ENCODE measurements at regions of chr12 and their contacts with region 1.

Region 1: DNA sequence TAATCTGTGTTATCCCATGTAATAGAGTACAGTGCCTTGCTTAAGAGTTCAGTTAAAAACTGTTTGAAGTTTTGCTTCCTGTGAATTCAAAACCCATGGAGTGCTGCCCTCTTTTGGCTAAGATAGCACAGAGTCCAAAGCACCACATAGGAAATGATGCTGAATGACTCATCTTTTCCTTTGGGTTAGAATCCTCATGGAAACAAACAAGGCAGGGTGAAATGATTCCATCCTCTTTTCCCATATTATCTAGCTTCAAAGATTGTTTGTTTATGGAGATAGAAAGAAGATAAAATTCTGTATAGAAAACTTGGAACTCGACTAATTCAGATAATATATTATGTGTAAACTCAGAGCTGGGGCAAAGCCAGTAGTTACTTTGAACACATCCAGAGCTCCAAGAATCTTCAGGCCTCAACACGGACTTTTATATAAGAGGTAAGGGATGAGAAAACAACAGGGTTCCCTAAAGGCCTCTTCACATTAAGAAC is 87.4 kb downstream of the OTOGL start:
- DNase-seq: peak; percentile 93
- ATAC-seq: peak; percentile 89
- H3K4me3 ChIP-seq: no peak overlapping the region
- H3K27ac ChIP-seq: peak overlapping the region; percentile 53
- H3K4me1 ChIP-seq: peaks cover 18% of the 10 kb centered on the region
- H3K27me3 ChIP-seq: no peaks in the 10 kb centered on the region
- CTCF ChIP-seq: peak; percentile 94

Region 2: DNA sequence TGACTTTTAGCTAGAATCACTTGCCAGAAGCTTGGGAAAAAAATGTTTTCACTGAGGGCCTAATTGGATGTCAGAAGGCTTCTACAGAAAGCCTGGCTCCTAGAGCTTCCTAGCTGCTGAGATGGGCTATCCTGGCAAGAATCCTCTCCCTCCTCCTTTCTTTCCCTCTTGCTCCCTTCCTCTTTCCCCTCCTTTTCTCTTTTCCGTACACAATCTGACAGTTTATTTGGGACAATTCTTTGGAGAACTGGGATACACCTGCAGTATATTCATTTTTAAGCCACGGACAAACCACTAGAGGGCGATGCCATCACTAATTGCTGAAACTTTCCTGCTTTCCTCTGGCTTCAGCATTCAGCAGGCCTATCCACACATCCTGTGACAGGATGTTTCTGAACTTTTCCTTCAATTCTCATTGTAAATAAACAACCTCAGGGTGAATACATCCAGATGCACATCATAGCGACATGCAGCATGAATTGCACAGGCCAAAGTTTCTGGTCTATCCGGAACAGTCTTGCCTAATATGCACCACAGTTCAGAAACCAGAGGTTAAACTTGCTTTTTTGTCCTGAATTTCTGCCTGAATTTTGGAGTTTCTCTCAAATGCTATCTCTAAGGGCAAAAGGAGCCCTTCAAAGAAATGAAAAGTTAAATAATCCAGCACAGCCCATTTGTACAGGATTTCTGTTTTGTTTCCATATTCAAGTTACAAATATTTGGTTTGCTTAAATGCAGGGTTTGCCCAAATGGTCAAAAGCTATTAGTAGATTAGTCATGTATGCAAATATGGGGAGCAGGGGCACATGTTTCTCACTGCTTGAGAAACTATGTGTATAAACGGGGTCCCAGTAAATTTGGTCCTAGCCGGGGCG is 638.8 kb before region 1 on chr12:
- CTCF ChIA-PET with region 1: no interaction called
- POLR2A ChIA-PET with region 1: no interaction called
- intact Hi-C with region 1: loop called (anchors 5 kb)
- DNase-seq: peak; percentile 91
- ATAC-seq: peak; percentile 22
- H3K4me3 ChIP-seq: peak overlapping the region; percentile 47
- H3K27ac ChIP-seq: peak overlapping the region; percentile 97
- H3K4me1 ChIP-seq: peaks cover 47% of the 10 kb centered on the region
- H3K27me3 ChIP-seq: no peaks in the 10 kb centered on the region
- CTCF ChIP-seq: peak; percentile 96

Region 3: DNA sequence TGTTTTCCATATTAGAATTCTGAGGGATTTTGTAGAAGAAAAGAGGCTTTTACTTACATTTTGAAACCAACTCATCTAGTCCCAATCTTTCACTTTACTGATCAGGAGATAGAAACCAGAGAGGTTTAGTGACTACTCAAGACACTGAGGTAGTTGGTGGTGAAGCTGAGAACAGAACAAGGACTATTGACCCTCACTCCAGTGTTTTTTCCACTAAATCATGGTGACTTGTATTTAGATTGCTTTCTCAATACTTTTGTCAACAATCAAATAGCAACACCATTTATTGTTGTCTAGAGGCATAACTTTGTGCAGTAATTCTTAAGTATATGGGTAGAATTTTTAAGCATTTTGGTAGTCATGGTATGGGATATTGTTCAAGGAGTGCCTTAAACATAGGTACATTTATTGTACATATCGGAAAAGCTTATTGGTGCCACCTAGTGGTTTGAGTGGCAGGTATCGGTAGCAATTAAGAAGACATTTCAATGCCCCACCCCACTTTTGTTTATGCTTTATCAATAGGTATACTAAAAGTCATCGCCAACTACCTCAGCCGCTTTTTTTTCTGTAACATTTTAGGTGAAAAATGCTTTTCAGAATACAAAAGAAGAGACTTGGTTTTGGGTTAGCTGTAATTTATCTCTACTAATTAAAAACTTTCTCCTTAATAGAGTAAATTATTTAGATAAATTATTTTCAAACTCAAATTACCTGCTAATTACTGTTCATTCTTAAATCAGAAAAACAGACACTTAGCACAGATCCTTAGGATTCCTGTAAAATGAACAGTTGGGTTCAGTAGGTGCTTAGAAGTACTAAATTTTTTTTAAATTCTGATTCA is 448.7 kb before region 1 on chr12:
- CTCF ChIA-PET with region 1: no interaction called
- POLR2A ChIA-PET with region 1: interaction called, 4 read pairs
- intact Hi-C with region 1: loop called (anchors 2 kb)
- DNase-seq: peak; percentile 89
- ATAC-seq: peak; percentile 72
- H3K4me3 ChIP-seq: no peak overlapping the region
- H3K27ac ChIP-seq: no peak overlapping the region
- H3K4me1 ChIP-seq: peaks cover 4% of the 10 kb centered on the region; the same call in 1 of the 2 replicates
- H3K27me3 ChIP-seq: no peaks in the 10 kb centered on the region
- CTCF ChIP-seq: peak; percentile 87

Region 4: GRCh38 chr12:79811351-79811750 is 375.4 kb before region 1 on chr12:
- CTCF ChIA-PET with region 1: no interaction called
- POLR2A ChIA-PET with region 1: no interaction called
- intact Hi-C with region 1: loop called (anchors 10 kb)
- DNase-seq: no peak
- ATAC-seq: no peak
- H3K4me3 ChIP-seq: no peak overlapping the region
- H3K27ac ChIP-seq: no peak overlapping the region
- H3K4me1 ChIP-seq: no peaks in the 10 kb centered on the region
- H3K27me3 ChIP-seq: no peaks in the 10 kb centered on the region
- CTCF ChIP-seq: peak; percentile 37

Region 5: GRCh38 chr12:79935021-79935623 is 251.7 kb before region 1 on chr12 and contains the start of gene PPP1R12A:
- CTCF ChIA-PET with region 1: no interaction called
- POLR2A ChIA-PET with region 1: no interaction called
- intact Hi-C with region 1: loop called (anchors 1 kb)
- DNase-seq: peak; percentile 98
- ATAC-seq: peak; percentile 88
- H3K4me3 ChIP-seq: peak within 1 kb of the TSS; percentile 95
- H3K27ac ChIP-seq: peak within 1 kb of the TSS; percentile 73
- H3K4me1 ChIP-seq: peaks cover 19% of the 10 kb centered on the region
- H3K27me3 ChIP-seq: no peaks in the 10 kb centered on the region
- CTCF ChIP-seq: no peak
- total RNA-seq, gene PPP1R12A: 43.2 and 67.5 TPM in 2 replicates

Region 6: GRCh38 chr12:80044694-80045046 is 142.1 kb before region 1 on chr12:
- CTCF ChIA-PET with region 1: interaction called, 4 read pairs
- POLR2A ChIA-PET with region 1: no interaction called
- intact Hi-C with region 1: loop called (anchors 5 kb)
- DNase-seq: peak; percentile 96
- ATAC-seq: peak; percentile 66
- H3K4me3 ChIP-seq: peak overlapping the region; percentile 53; the same call in 1 of the 2 replicates
- H3K27ac ChIP-seq: peak overlapping the region; percentile 91
- H3K4me1 ChIP-seq: peaks cover 38% of the 10 kb centered on the region
- H3K27me3 ChIP-seq: no peaks in the 10 kb centered on the region
- CTCF ChIP-seq: no peak

Region 7: DNA sequence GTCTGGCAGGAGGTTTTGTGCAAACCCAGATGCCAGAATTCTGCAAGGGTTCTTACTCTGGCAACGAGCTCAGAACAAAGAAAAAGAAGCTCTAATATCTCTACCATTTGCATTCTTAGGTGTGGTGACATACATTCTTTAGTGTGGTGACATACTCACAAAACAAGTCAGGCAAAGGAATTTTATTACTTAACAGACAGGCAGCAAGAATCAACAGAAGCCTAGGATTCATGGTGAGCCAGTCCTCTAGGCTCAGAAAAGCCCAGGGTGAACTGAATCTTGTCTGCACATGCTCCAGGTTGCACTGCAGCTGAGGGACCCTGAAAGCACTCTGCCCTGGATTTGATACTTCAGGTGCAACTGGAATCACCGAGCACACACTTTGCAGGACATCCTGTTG is 134.9 kb after region 1 on chr12:
- CTCF ChIA-PET with region 1: no interaction called
- POLR2A ChIA-PET with region 1: no interaction called
- intact Hi-C with region 1: no loop called
- DNase-seq: peak; percentile 80
- ATAC-seq: peak; percentile 82
- H3K4me3 ChIP-seq: no peak overlapping the region
- H3K27ac ChIP-seq: no peak overlapping the region
- H3K4me1 ChIP-seq: peaks cover 14% of the 10 kb centered on the region
- H3K27me3 ChIP-seq: no peaks in the 10 kb centered on the region
- CTCF ChIP-seq: no peak

Region 8: GRCh38 chr12:81114226-81114625 is 927.5 kb after region 1 on chr12:
- CTCF ChIA-PET with region 1: no interaction called
- POLR2A ChIA-PET with region 1: no interaction called
- intact Hi-C with region 1: no loop called
- DNase-seq: no peak
- ATAC-seq: no peak
- H3K4me3 ChIP-seq: no peak overlapping the region
- H3K27ac ChIP-seq: no peak overlapping the region
- H3K4me1 ChIP-seq: no peaks in the 10 kb centered on the region
- H3K27me3 ChIP-seq: no peaks in the 10 kb centered on the region
- CTCF ChIP-seq: no peak